Heart right ventricle (tissue), 16 donors: ENCODE measurements at regions of chr14 and their contacts with region 1.

Region 1: GRCh38 chr14:94904636-94905035 is 134.7 kb upstream of the GSC start:
- DNase-seq: no peak
- ATAC-seq: no peak
- H3K4me3 ChIP-seq: no peak overlapping the region
- H3K27ac ChIP-seq: no peak overlapping the region
- H3K4me1 ChIP-seq: no peaks in the 10 kb centered on the region
- H3K27me3 ChIP-seq: peaks cover 0 to 26% (median 5%) of the 10 kb centered on the region in 7 donors
- CTCF ChIP-seq: no peak

Region 2: GRCh38 chr14:94979891-94980290 is 75.3 kb after region 1 on chr14:
- intact Hi-C with region 1: no loop called
- DNase-seq: no peak
- ATAC-seq: no peak
- H3K4me3 ChIP-seq: no peak overlapping the region
- H3K27ac ChIP-seq: no peak overlapping the region
- H3K4me1 ChIP-seq: peaks cover 0 to 11% (median 0%) of the 10 kb centered on the region in 9 donors
- H3K27me3 ChIP-seq: peaks cover 0 to 10% (median 0%) of the 10 kb centered on the region in 7 donors
- CTCF ChIP-seq: no peak

Region 3: GRCh38 chr14:95023886-95024285 is 119.2 kb after region 1 on chr14:
- intact Hi-C with region 1: no loop called
- DNase-seq: no peak
- ATAC-seq: no peak
- H3K4me3 ChIP-seq: no peak overlapping the region
- H3K27ac ChIP-seq: no peak overlapping the region
- H3K4me1 ChIP-seq: peaks cover 0 to 4% (median 0%) of the 10 kb centered on the region in 9 donors
- H3K27me3 ChIP-seq: no peaks in the 10 kb centered on the region
- CTCF ChIP-seq: no peak

Region 4: GRCh38 chr14:95098984-95099599 is 194.5 kb after region 1 on chr14:
- intact Hi-C with region 1: loop called in 3 of 10 experiments (anchors 2 to 10 kb)
- DNase-seq: peak; percentile 57 to 65
- ATAC-seq: peak in 7 of 8 donors; percentile 66 to 85 (median 72)
- H3K4me3 ChIP-seq: no peak overlapping the region
- H3K27ac ChIP-seq: no peak overlapping the region
- H3K4me1 ChIP-seq: peaks cover 0 to 32% (median 17%) of the 10 kb centered on the region in 9 donors
- H3K27me3 ChIP-seq: no peaks in the 10 kb centered on the region
- CTCF ChIP-seq: peak; percentile 64 to 86 (median 75)